ENCODE measurements at regions of chr1 and their contacts with region 1.

Region 1: GRCh38 chr1:66402194-66402593 is 131.8 kb upstream of the SGIP1 start:
- DNase-seq: no peak
- ATAC-seq: no peak
- H3K4me3 Mint-ChIP-seq: no peak overlapping the region
- H3K27ac Mint-ChIP-seq: no peak overlapping the region
- H3K4me1 Mint-ChIP-seq: peaks cover 34% of the 10 kb centered on the region
- H3K27me3 Mint-ChIP-seq: peaks cover 1% of the 10 kb centered on the region
- CTCF ChIP-seq: no peak

Region 2: DNA sequence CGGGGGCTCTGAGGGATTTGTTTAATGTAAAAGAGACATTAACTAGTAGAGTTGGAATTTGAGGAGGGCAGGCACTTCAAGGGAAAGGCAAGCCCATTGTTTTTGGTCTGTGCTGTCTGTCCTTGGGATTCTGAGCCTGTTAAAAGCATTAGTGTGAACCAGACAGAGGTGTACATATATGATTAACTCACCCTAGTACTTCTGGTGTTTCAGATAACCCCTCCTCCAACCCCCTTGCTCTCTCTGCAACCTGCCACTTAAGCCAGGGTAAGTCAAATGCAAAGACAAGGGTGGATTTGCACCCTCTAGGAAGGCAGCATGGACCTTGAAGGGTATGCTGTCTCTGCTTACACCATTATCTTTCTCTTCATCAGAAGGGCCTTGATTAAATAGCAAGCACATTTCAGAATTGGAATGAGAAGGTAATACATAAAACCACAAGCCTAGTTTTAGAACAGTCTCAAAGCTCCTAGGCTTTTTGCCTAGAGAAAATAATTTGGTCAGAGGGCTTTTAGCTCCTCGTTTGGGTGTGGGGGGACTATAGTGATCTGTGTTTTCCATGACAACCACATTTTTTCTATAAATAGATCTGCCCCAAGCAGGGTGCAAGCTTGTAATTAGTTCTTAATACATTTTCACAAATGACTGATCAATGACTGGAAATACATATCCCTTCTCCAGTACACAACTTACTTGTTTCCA is 11.1 kb after region 1 on chr1:
- CTCF ChIA-PET with region 1: interaction called, 3 read pairs
- POLR2A ChIA-PET with region 1: no interaction called
- intact Hi-C with region 1: loop called (anchors 1 kb)
- DNase-seq: no peak
- ATAC-seq: peak; percentile 39
- H3K4me3 Mint-ChIP-seq: no peak overlapping the region
- H3K27ac Mint-ChIP-seq: no peak overlapping the region
- H3K4me1 Mint-ChIP-seq: peaks cover 38% of the 10 kb centered on the region
- H3K27me3 Mint-ChIP-seq: no peaks in the 10 kb centered on the region
- CTCF ChIP-seq: no peak